ENCODE measurements at regions of chr6 and their contacts with region 1.

Region 1: DNA sequence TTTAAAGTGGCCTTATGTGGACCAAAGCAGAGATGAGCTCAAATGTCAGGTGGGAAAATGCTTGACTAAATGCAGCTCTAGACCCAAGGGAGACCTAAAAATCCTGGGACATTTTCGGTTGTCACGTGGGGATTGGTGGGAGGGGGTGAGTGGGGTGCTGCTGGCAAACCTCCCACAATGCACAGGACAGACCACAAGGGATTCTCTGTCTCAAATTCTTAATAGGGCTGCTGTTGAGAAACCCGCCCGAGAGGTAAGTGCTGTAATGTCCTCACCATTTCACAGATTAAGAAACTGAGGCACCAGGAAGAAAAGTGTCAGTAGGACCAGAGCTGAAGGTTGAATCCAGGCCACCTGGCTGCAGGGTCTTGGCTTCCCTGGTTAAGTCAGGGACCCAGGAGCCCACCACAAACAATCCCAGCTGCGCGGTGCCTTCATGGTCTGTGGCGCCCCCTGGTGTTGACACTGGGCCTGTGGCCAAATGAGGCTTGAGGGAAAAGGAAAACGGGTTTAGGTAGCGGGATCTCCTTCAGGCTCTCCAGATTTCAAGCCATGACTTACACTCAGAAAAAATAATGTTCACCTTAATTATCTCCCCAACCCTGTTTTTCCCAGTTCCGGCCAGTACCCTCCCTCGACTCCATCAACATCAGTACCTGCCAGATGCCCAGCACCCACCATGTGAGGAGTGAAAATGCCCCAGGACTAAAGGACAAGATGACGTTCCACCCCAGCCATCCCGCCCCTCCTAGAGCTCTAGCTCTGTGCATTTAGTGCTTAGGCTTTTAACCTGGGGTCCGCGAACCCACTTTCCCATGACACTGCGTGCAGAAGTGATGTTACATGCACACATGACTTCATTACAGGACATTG is 7.2 kb downstream of the HLA-G start:
- DNase-seq: no peak
- H3K4me3 ChIP-seq: no peak overlapping the region
- CTCF ChIP-seq: peak; percentile 73

Region 2: GRCh38 chr6:29632789-29633533 is 201.8 kb before region 1 on chr6 and contains the start of gene GABBR1:
- CTCF ChIA-PET with region 1: no interaction called
- POLR2A ChIA-PET with region 1: no interaction called
- DNase-seq: no peak
- H3K4me3 ChIP-seq: peak within 1 kb of the TSS; percentile 79
- CTCF ChIP-seq: no peak

Region 3: DNA sequence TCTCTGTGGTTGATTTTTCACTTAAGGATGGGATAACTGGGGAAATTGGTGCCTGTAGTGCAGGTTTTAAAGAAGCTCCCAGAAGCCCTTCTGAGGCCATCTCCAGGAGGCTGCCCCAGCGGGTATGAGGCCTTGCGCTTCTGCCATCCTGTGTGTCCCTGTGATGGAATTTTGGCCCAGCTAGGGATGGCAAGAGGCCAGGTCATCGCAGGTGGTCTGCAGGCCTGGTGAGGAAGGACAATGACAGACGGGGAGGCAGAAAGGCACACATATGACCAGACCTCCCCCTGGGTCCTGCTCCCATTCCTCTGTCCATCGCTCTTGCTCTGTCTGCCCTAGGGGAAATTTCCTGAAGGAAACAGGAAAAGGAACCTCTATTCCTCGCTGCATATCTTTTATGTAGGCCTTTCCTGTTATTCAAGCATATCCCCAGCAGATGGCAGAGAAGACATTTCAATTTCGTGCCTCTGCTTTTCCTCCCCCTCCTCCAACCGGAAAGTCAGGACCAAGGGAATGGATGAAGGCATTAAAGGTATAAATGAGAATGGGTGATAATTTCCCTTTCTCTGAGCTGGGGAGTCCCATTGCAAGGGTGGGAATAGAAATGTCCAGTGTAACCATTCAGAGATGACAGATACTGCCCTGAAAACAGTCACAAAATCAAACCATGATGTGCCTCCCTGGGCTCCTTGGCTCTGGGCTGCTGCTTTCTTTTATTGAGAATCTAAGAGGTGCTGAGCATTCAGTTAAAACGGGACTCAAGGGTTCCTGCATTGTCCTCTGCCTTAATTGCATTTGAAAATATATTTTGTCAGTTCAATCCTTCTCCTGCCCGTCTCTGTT is 129.2 kb before region 1 on chr6:
- CTCF ChIA-PET with region 1: interaction called, 33 read pairs
- POLR2A ChIA-PET with region 1: no interaction called
- DNase-seq: peak; percentile 10
- H3K4me3 ChIP-seq: no peak overlapping the region
- CTCF ChIP-seq: peak; percentile 54

Region 4: GRCh38 chr6:29737707-29738630 is 96.8 kb before region 1 on chr6:
- CTCF ChIA-PET with region 1: interaction called, 50 read pairs
- POLR2A ChIA-PET with region 1: no interaction called
- DNase-seq: no peak
- H3K4me3 ChIP-seq: no peak overlapping the region
- CTCF ChIP-seq: peak; percentile 78

Region 5: DNA sequence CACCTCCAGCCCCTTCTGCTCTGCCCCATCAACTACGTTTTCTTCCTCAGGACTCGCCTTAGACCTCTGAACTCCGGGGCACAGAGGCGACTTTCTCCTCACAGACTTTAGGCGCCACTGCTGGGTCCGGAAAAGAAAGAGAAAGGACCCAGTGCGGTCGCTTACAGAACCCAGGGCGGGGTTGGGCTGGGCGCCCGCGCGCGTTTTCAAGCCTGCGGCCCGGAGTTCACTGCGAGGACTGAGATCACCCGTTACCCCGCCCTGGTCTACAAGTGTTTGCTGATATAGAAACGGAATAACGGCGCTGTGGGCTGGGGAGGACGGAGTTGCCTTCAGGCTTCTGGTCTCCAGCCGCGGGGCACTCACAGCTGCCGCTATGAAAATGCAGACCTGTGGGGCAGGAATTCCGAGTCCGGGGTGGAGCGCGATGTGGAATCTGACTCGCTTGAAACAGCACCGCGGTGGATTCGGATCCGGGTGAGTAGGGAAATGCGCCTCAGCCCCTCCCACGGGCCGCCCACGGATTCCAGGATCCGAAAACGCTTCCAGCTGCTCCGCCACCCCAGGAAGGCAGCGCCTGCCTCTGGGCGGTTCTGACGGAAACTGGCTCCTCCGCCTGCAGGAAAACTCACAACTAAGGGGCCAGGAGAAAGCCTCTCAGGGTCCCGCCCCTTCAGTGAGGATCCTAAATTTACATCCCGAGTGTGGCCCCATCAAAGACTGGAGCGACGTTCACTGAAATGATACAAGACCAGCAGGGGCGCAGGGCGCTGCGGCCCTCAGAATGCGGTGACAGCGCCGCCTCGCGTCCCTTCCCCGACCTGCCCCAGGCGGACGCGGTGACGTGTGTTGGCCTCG is 82.1 kb before region 1 on chr6:
- CTCF ChIA-PET with region 1: interaction called, 12 read pairs
- POLR2A ChIA-PET with region 1: no interaction called
- DNase-seq: peak; percentile 40
- H3K4me3 ChIP-seq: peak overlapping the region; percentile 73
- CTCF ChIP-seq: peak; percentile 100

Region 6: GRCh38 chr6:29800254-29800653 is 34.5 kb before region 1 on chr6:
- CTCF ChIA-PET with region 1: no interaction called
- POLR2A ChIA-PET with region 1: no interaction called
- DNase-seq: no peak
- H3K4me3 ChIP-seq: no peak overlapping the region
- CTCF ChIP-seq: no peak

Region 7: DNA sequence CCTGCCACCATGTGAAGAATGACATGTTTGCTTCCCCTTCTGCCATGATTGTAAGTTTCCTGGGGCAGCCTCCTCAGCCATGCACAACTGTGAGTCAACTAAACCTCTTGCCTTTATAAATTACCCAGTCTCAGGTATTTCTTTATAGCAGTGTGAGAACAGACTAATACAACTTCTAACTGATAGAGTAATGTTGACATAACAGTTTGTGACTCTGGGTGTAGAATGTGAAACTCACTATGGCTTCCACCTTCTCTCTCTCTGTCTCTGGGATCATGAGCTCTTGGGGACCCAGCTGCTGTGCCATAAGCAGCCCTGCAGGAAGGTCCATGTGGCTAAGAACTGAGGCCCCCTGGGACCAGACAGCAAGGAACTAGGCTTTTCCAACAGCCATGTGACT is 10.7 kb before region 1 on chr6:
- CTCF ChIA-PET with region 1: interaction called, 14 read pairs
- POLR2A ChIA-PET with region 1: no interaction called
- DNase-seq: no peak
- H3K4me3 ChIP-seq: no peak overlapping the region
- CTCF ChIP-seq: no peak

Measured in AG04449 (cell line).